Activated CD8-positive, alpha-beta memory T cell treated with anti-CD3 and anti-CD28 coated beads, Interleukin-2, amount 10 ng/mL, durations not matched to agents 7 days and 5 days (primary cell): ENCODE measurements at regions of chr19 and their contacts with region 1.

Region 1: DNA sequence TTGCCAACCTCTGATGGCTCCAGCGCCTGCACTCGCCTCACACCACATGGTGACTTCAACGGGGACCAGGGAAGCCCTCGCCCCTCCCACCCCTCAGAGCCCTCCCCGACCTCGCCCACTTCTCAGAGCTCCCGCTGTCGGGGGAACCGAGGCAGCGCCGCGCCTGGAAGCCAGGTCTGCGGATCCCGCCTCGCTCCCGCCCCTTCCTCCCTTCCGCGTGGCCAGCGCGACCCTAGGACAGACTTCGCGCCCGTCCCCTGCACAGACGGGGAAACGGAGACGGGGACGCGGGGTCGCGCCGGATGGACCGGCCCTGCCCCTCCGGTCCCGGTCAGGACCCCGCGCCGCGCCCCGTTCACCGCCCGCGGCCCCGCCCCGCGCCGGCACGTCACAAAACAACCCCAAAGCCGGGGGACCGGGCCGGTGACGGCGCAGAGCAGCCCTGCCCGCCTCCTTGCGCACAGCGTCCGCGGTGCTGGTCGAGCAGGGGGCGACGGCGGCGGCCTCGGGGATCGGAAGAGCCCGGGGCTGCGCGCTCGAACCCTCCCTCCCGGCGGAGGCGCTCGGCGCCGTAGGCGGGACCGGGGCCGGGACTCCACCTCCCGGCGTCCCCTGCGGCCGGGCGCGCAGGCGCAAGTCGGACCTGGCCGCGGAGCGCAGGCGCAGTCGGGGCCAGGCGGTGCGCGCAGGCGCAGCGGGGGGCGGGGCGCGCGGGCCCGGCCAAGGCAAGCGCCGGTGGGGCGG is 379 bp upstream of the CDC34 start:
- DNase-seq: peak; percentile 90
- ATAC-seq: peak; percentile 83
- H3K4me3 Mint-ChIP-seq: peak overlapping the region; percentile 77
- H3K27ac Mint-ChIP-seq: peak overlapping the region; percentile 83
- H3K4me1 Mint-ChIP-seq: peaks cover 18% of the 10 kb centered on the region
- H3K27me3 Mint-ChIP-seq: peaks cover 3% of the 10 kb centered on the region

Region 2: DNA sequence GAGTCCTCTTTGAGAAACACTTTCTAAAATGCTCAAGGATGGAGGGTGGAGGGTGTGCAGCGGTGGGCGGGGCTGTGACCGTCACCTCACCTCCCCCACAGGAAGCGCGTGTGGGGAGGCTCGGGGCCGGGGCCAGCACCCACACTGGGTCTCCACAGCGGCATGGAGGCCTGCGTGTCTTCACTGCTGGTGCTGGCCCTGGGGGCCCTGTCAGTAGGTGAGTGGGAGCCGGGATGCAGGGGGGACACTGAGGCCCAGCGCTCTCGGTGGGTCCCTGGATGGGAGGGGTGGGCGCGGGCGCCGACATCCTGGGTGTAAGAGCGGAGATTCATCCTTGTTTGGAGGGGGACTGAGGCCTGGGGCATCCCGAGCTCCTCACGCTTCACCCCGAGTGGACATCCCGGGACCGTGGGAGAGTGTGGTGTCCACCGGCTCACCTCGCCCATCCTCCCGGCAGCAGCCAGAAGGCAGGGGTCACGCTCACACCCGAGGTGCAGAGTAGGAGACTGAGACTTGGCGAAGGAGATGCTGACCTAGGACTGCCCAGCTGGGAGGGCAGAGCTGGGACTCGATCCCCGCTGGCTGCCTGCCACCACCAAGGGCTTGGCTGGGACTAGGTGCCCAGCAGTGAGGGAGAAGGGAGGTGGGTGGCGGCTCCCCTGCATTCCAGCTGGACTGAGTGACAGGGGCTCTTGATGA is 12.9 kb after region 1 on chr19 and contains the start of gene GZMM:
- CTCF ChIA-PET with region 1: interaction called, 18 read pairs
- DNase-seq: peak; percentile 85
- ATAC-seq: peak; percentile 94
- H3K4me3 Mint-ChIP-seq: peak within 1 kb of the TSS; percentile 83
- H3K27ac Mint-ChIP-seq: peak within 1 kb of the TSS; percentile 91
- H3K4me1 Mint-ChIP-seq: peaks cover 20% of the 10 kb centered on the region
- H3K27me3 Mint-ChIP-seq: no peaks in the 10 kb centered on the region
- total RNA-seq, gene GZMM: 46.9 to 76.3 TPM

Region 3: DNA sequence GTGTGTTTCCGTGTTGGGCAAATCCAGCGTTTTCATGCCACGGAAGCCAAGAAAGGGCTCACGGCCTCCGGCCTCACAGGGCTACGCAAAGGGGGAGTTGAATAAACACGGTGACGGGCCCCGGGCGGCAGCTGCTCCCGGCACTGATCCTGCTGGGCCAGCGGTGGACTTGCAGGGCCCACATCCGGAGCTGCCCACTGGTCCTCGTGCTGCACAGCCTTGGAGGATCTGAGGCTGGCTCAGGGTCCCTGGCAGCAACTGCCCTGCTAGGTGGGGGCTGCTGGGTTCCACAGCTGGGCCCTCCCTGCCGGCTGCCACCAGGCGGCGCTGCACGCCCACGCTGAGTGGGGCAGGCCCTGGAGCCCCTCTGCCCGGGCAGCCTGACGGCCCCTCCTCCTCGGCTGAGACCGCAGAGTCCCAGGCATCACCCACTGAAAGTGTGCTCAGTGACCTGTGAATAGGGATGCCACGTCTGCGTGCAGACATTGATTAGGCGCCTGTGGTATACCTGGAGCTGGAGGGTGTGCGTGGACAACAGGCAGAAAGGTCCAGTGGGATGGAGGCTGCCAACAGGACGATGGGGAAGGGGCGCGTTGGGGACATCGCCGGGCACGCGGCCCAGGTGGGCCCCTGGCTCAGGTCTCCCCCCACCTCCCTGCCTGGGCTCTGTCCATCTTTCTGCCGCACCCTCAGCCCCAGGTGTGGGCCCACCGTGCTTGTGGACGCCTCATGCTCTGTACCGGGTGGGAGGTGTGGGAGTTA is 53.2 kb after region 1 on chr19:
- CTCF ChIA-PET with region 1: interaction called, 14 read pairs
- DNase-seq: peak; percentile 66
- ATAC-seq: peak; percentile 70
- H3K4me3 Mint-ChIP-seq: no peak overlapping the region
- H3K27ac Mint-ChIP-seq: no peak overlapping the region
- H3K4me1 Mint-ChIP-seq: peaks cover 2% of the 10 kb centered on the region
- H3K27me3 Mint-ChIP-seq: peaks cover 15% of the 10 kb centered on the region